Upper lobe of right lung (tissue), 1 donor: ENCODE measurements at regions of chr7 and their contacts with region 1.

Region 1: GRCh38 chr7:148962823-148963582 is 65.3 kb downstream of the PDIA4 start:
- DNase-seq: peak; percentile 76
- ATAC-seq: peak; percentile 78
- H3K4me3 ChIP-seq: peak overlapping the region; percentile 65
- H3K27ac ChIP-seq: peak overlapping the region; percentile 83
- H3K4me1 ChIP-seq: peaks cover 4% of the 10 kb centered on the region
- H3K27me3 ChIP-seq: no peaks in the 10 kb centered on the region
- CTCF ChIP-seq: peak; percentile 73

Region 2: DNA sequence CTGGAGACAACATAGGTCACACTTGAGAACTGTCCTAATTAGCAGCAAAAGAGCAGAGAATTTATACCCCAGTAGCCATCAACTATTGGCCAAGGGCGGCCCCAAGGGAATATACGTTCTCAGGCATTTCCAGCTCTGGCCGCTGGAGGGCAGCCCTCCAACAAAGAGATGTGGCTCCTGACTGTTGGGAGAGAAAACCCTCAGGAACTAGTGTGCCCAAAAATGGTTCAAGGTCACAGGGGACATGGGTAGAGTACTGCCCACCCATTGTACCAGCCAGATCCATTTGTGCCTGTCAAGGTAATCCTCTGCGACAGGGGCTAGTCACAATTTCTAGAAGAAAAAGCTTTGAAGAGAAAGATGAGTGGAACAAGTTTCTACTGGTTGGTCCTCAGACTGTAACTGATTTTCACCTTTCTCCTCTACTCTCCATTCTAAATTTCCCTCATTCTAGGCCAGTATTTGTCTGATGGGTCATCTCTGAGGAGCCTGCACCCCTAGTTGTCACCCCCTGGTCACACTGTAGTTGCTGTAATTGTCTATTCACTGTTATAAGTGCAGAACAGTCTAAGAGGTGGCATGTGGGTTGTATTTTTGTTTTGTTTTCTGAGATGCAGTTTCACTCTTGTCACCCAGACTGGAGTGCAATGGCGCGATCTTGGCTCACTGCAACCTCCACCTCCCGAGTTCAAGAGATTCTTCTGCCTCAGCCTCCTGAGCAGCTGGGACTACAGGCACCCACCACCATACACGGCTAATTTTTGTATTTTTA is 387.2 kb before region 1 on chr7:
- intact Hi-C with region 1: loop called (anchors 10 kb)
- DNase-seq: peak; percentile 84
- ATAC-seq: peak; percentile 96
- H3K4me3 ChIP-seq: no peak overlapping the region
- H3K27ac ChIP-seq: no peak overlapping the region
- H3K4me1 ChIP-seq: no peaks in the 10 kb centered on the region
- H3K27me3 ChIP-seq: no peaks in the 10 kb centered on the region
- CTCF ChIP-seq: peak; percentile 87

Region 3: DNA sequence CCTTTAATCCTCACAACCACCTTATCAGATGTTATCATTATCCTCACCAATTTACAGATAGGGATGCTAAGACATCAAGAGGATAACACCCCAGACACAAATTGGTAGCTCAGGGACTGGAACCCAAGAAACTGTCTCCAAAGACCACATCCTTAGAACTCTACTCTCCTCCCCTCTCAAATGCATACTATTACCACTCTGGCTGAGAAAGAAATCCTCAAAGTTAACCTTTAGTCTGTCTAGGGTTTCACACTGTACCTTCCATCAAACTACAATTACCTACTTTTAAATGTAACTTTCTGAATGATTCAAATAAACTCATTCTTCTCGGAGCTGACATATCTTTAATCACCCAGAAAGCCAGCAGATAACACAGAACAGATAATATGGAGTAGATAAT is 85.5 kb before region 1 on chr7:
- intact Hi-C with region 1: loop called (anchors 10 kb)
- DNase-seq: no peak
- ATAC-seq: no peak
- H3K4me3 ChIP-seq: no peak overlapping the region
- H3K27ac ChIP-seq: no peak overlapping the region
- H3K4me1 ChIP-seq: no peaks in the 10 kb centered on the region
- H3K27me3 ChIP-seq: no peaks in the 10 kb centered on the region
- CTCF ChIP-seq: no peak

Region 4: DNA sequence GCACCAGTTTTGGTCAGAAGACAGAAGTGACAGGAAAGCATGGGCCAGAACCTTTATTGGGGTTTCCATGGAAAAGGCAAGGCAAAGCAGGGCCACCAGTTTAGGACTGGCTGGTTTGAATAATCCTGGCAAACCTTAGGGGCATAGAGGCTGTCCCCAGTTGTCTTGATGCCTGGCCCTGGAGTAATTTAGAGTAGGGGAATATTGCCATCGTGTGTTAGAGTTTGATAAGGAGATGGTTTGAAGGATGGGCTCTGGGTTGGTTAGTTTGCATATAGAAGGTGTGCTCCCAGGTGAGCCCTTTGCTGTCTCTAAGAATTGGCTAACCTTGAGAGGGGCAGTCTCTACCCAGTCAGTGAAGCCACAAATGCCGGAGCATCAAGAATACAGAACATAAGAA is 418.2 kb after region 1 on chr7:
- intact Hi-C with region 1: no loop called
- DNase-seq: no peak
- ATAC-seq: no peak
- H3K4me3 ChIP-seq: no peak overlapping the region
- H3K27ac ChIP-seq: no peak overlapping the region
- H3K4me1 ChIP-seq: no peaks in the 10 kb centered on the region
- H3K27me3 ChIP-seq: no peaks in the 10 kb centered on the region
- CTCF ChIP-seq: no peak